Activated CD4-positive, alpha-beta T cell treated with anti-CD3 and anti-CD28 coated beads, Interleukin-2, amount 10 ng/mL, durations not matched to agents 24 days and 14 days (primary cell): ENCODE measurements at regions of chr11 and their contacts with region 1.

Region 1: DNA sequence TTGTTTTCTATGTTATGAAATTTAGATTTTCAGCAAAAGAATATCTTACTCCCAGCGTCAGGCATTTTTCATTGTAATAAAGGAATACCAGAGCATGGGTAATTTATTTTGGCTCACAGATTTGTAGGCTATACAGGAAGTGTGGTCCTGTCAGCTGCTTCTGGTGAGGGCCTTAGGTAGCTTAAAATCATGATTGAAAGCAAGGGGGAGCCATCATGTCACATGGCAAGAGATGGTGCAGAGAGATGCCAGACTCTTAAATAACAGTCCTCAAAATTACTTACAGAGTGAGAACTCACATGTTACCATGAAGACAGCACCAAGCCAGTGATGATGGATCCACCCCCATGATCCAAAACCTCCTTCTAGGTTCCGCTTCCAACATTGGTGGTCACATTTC is 825.0 kb upstream of the CHORDC1 start:
- DNase-seq: no peak
- H3K4me3 Mint-ChIP-seq: no peak overlapping the region
- H3K27ac Mint-ChIP-seq: no peak overlapping the region
- H3K4me1 Mint-ChIP-seq: no peaks in the 10 kb centered on the region
- H3K27me3 Mint-ChIP-seq: no peaks in the 10 kb centered on the region

Region 2: DNA sequence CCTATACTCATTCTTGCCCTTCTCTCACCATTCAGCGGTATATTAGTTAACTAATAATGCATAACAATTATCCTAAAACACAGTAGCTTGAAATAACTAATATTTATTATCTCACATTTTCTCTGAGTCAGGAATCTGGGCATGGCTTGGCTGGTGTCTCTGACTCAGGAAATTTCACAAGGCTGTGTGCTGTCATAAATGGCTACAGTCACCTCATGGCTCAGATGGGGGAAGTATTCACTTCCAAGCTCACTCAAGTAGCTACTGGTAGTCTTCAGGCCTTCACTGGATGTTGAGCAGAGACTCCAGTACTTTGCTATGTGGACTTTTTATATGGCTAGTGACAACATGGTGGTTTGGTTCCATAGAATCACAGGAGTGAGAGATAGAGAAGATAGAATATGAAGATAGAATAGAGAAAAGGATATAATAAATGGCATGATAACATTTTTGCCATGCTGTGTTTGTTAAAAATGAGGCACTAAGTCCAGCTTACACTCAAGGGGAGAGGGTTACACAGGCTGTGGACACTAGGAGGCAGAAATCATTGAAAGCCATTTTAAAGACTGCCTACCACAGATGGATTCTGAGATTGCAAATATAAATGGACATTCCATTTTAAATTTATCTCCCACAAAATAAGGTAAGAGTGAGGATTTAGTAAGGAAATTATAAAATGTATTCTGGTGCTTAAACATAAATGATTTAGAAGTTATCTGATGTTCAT is 172.8 kb after region 1 on chr11:
- intact Hi-C with region 1: no loop called
- DNase-seq: no peak
- H3K4me3 Mint-ChIP-seq: no peak overlapping the region
- H3K27ac Mint-ChIP-seq: no peak overlapping the region
- H3K4me1 Mint-ChIP-seq: no peaks in the 10 kb centered on the region
- H3K27me3 Mint-ChIP-seq: no peaks in the 10 kb centered on the region

Region 3: GRCh38 chr11:91489989-91490388 is 442.1 kb after region 1 on chr11:
- intact Hi-C with region 1: loop called (anchors 10 kb)
- DNase-seq: no peak
- H3K4me3 Mint-ChIP-seq: no peak overlapping the region
- H3K27ac Mint-ChIP-seq: no peak overlapping the region
- H3K4me1 Mint-ChIP-seq: no peaks in the 10 kb centered on the region
- H3K27me3 Mint-ChIP-seq: no peaks in the 10 kb centered on the region